B cell (primary cell): ENCODE measurements at regions of chr4 and their contacts with region 1.

Region 1: DNA sequence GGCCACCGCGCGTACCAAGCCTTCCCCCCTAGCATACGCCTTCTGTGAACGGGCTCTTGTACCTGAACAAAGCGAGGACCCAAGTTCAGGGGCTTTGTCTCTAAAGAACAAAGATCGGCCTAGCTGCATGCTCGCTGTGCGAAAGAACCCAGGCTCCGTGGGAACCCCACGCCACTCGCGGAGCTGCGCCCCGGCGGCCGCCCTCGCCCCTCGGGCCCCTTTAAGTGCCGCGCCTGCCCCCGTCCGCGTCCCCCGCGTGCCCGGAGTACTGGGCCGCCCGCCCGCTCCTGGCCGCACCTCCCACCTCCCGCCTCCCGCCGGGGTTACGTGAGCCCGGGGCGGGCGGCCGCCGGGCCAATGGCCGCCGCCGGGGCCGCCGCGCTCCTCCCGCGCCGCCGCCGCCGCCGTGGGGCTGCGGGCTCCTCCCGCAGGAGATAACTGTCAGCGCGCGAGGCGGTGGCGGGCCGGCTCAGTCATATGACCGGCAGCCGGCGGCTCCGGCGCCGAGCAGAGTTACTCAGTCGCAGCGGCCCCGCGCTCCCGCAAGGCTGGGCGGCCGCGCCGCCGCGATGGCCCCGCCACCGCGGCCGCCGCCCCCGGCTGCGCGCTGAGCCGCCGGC is at the start of gene FNIP2:
- DNase-seq: peak; percentile 69
- ATAC-seq: peak; percentile 70
- H3K4me3 ChIP-seq: peak within 1 kb of the TSS; percentile 30 to 53 (median 44)
- H3K4me3 Mint-ChIP-seq: peak within 1 kb of the TSS; percentile 89
- H3K27ac ChIP-seq: no peak within 1 kb of the TSS
- H3K27ac Mint-ChIP-seq: peak within 1 kb of the TSS; percentile 32
- H3K4me1 ChIP-seq: peaks cover 12 to 22% of the 10 kb centered on the region in 2 donors
- H3K4me1 Mint-ChIP-seq: peaks cover 8% of the 10 kb centered on the region
- H3K27me3 ChIP-seq: peaks cover 8 to 68% (median 67%) of the 10 kb centered on the region in 4 experiments
- H3K27me3 Mint-ChIP-seq: peaks cover 76% of the 10 kb centered on the region
- CTCF ChIP-seq: no peak
- total RNA-seq, gene FNIP2: 0.17 and 0.39 TPM in 2 replicates

Region 2: DNA sequence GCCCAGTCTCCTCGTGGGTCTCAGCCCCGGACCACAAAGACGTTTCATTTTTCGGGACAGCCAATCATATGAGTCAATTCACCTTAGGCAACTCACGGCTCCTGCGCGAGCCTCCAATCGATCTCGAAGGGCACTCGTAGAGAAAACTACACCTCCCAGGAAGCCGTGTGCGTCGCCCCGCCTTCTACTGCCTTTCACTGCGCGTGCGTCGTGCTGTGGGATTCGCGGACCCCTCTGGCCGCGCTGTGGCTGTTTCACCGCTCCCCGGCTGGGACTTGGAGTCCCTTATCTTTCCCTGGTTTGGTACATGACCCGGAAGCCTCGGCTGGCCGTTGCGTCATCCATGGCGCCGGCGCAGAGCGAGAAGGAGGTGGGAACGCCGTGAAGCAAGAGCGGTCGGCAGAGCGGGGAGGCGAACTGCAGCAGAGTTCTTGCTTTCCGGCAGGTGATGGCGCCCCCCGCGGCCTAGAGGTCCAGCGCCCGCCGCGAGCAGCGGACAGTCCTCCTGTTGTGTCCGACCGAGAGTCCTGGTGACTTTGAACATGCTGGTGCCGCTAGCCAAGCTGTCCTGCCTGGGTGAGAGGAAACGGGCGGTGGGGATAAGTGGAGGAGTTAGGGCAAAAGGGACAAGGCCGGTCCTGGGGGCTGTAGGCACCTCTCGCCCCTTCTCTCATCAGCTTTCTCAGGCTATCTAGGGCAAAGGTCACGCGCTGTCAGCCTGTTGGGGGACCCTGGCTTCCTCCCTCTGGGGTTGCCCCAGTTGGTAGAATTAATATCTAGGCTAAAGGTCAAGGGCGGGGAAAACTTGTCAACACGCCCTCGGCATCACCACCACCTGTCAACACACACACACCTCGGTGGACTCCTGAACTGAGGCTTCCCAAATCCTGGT is 96.5 kb before region 1 on chr4 and contains the start of gene ETFDH:
- CTCF ChIA-PET with region 1: no interaction called
- POLR2A ChIA-PET with region 1: no interaction called
- intact Hi-C with region 1: loop called (anchors 5 kb)
- DNase-seq: peak; percentile 100
- ATAC-seq: peak; percentile 80
- H3K4me3 ChIP-seq: peak within 1 kb of the TSS; percentile 73 to 96 (median 77)
- H3K4me3 Mint-ChIP-seq: peak within 1 kb of the TSS; percentile 90
- H3K27ac ChIP-seq: peak within 1 kb of the TSS; percentile 93 to 97
- H3K27ac Mint-ChIP-seq: peak within 1 kb of the TSS; percentile 95
- H3K4me1 ChIP-seq: peaks cover 12 to 13% of the 10 kb centered on the region in 2 donors
- H3K4me1 Mint-ChIP-seq: peaks cover 22% of the 10 kb centered on the region
- H3K27me3 ChIP-seq: no peaks in the 10 kb centered on the region
- H3K27me3 Mint-ChIP-seq: no peaks in the 10 kb centered on the region
- CTCF ChIP-seq: peak; percentile 68
- total RNA-seq, gene ETFDH: 8.8 and 10.8 TPM in 2 replicates

Region 3: GRCh38 chr4:158722917-158723793 is 45.5 kb before region 1 on chr4 and contains the start of gene PPID:
- CTCF ChIA-PET with region 1: no interaction called
- POLR2A ChIA-PET with region 1: no interaction called
- intact Hi-C with region 1: loop called (anchors 5 kb)
- DNase-seq: peak; percentile 89
- ATAC-seq: peak; percentile 89
- H3K4me3 ChIP-seq: peak within 1 kb of the TSS; percentile 76 to 92 (median 88)
- H3K4me3 Mint-ChIP-seq: peak within 1 kb of the TSS; percentile 97
- H3K27ac ChIP-seq: peak within 1 kb of the TSS; percentile 71 to 87
- H3K27ac Mint-ChIP-seq: peak within 1 kb of the TSS; percentile 89
- H3K4me1 ChIP-seq: peaks cover 7 to 12% of the 10 kb centered on the region in 2 donors
- H3K4me1 Mint-ChIP-seq: peaks cover 20% of the 10 kb centered on the region
- H3K27me3 ChIP-seq: peaks cover 0 to 6% (median 4%) of the 10 kb centered on the region in 4 experiments
- H3K27me3 Mint-ChIP-seq: peaks cover 16% of the 10 kb centered on the region
- CTCF ChIP-seq: no peak
- total RNA-seq, gene PPID: 18.7 and 23.7 TPM in 2 replicates

Region 4: DNA sequence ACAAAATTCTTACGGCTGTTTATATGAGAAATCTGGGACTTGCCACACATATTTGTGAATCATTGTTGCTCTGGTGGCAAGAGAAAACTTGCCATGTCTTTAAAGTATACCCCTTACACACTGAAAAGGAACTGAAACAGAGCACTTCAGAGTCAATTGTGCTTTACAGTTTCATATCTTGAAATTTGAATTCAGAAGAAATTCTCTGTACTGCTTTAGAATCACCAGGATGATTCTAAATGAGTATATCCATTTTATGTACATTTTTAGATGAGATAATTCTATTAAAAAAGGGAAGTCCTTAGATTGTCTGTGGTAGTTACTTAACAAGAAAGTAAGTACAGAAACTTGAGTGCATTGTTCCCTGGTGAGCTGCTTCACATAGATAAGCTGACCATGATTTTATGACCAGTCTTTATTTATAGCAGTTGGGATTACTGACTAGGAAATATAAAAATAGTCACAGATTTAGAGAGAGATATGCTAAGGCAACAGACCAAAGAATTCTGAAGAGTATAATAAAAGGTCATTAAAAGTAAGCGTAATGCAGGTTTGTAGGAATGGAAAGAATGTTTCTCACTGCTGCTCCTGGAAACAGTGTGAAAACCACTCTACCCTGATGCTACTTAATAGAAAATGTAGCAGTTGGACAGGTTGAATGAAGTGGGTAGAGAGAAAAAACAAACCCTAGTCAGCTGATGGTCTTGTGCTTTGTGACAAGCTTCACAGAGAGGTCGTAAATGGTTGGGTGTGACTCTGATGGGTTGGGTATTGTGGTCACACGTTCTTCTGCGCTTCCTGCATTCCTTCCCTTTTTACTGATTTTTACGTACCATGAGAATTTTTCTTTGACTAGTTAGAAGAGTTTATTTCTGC is 41.2 kb after region 1 on chr4:
- CTCF ChIA-PET with region 1: no interaction called
- POLR2A ChIA-PET with region 1: interaction called, 6 read pairs
- intact Hi-C with region 1: loop called (anchors 5 kb)
- DNase-seq: peak; percentile 45
- ATAC-seq: peak; percentile 33
- H3K4me3 ChIP-seq: no peak overlapping the region
- H3K4me3 Mint-ChIP-seq: peak overlapping the region; percentile 4
- H3K27ac ChIP-seq: no peak overlapping the region
- H3K27ac Mint-ChIP-seq: no peak overlapping the region
- H3K4me1 ChIP-seq: peaks cover 20 to 23% of the 10 kb centered on the region in 2 donors
- H3K4me1 Mint-ChIP-seq: peaks cover 22% of the 10 kb centered on the region
- H3K27me3 ChIP-seq: peaks cover 10 to 92% (median 82%) of the 10 kb centered on the region in 4 experiments
- H3K27me3 Mint-ChIP-seq: peaks cover 77% of the 10 kb centered on the region
- CTCF ChIP-seq: no peak